ENCODE measurements at regions of chr1 and their contacts with region 1.

Region 1: GRCh38 chr1:40783001-40783905 is at the start of gene KCNQ4:
- DNase-seq: peak; percentile 47
- total RNA-seq, gene KCNQ4: 0.61 and 1.2 TPM in 2 replicates

Region 2: DNA sequence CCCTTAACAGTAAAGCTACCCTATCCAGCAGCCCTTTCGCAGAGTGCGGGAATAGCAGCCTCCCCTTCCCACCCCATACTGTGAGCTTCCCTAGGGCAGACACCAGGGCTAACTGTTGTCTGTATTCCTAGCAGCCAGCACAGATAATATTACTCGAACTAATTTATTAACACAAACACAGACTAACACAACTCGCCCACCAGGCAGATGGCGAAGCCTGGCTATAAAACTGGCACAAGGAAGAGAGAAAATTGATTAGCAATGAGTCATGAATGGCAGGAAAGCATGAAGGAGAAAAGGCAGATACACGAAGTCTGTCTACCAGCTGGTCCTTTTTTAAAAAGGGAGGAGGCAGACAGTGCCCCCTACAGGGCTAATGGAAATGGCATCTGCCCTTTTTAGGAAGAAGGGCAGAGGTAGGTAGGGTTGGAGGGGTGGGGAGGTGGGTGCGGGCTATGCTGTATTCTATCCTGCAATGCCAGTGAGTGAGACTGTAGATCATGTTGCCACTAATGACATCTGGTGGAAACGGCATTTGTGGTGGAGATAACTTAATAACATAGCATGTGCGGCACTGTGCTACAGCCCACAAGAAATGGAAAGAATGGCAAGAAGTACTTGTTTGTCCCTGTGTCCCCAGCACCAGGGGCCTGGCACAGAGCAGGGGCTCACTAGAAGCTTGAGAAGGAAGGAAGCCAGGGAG is 165.6 kb after region 1 on chr1:
- in situ Hi-C with region 1: loop called (anchors 10 kb)
- DNase-seq: no peak

Measured in G401 (cell line).